ENCODE measurements at regions of chr1 and their contacts with region 1.

Region 1: DNA sequence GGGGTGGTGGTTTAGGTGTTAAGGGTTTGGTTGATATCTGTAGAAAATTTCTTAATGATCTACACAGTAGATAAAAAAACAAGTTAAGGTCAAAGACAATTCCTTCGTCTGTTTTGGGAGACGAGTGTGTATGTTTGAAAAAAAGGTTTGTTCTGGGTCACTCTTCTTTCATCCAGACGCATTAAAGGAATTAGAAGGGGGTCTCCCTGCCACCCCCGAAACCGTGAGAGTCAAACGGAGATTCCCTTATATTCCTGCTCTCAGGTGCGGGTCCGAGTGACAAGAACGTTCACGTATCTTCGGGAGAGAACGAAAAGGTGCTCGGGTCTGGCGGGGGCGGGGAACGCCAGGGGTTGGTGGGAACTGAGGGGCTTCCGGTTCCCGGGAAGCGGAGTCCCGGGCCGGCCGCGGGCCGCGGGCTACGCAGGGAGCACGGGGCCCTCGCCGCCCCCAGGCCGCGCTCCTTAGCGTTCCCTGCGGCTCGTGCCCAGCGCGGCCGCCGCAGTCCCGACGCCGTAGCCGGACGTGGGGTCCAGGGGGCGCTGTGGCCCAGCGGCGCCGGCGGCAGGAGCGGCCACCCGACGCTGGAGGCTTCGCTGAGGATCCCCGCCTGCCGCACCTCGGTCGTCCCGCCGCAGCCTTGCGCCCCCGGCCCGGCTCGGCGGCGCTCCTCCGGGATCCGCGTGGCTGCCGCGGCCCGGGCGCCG is at the start of gene ZFYVE9:
- DNase-seq: peak; percentile 87
- ATAC-seq: peak; percentile 81
- H3K4me3 ChIP-seq: peak within 1 kb of the TSS; percentile 90
- H3K27ac ChIP-seq: peak within 1 kb of the TSS; percentile 30
- H3K4me1 ChIP-seq: peaks cover 30% of the 10 kb centered on the region
- H3K27me3 ChIP-seq: no peaks in the 10 kb centered on the region
- CTCF ChIP-seq: peak; percentile 52
- total RNA-seq, gene ZFYVE9: 14.2 and 16.6 TPM in 2 replicates

Region 2: DNA sequence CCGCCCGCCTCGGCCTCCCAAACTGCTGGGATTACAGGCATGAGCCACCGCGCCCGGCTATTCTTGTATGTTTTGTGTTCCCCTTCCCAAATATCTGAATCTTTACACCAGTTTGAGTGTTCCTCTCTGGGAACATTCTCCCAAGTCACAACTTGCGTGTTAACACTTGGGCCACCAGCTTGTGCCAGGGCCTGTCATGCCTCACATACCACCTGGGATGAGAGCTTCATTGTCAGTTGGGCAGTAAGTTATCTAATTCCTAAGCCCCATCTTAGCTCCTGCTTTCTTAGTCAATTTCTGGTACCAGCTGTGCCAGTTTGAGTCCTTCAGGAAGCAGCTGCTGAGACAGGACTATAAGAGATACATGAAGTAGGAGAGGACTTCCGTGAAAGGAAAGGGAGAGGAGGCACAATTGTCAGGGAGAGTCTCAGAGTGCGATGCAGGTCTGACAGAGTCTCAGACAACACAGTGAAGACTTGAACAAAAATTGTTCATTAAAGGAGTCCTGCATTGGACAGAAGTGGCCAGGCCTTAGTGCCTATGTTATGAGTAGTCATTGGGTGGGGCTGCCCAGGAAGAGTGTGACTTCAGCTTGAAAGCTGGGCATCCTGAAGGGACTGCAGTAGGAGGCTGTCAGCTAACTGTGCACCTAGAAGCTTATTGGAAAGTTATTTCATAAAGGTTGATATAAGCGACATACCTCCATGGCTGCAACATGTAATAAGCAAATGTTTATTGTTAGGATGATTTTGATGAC is 17.5 kb after region 1 on chr1:
- CTCF ChIA-PET with region 1: interaction called, 11 read pairs
- POLR2A ChIA-PET with region 1: no interaction called
- intact Hi-C with region 1: no loop called
- DNase-seq: peak; percentile 76
- ATAC-seq: peak; percentile 100
- H3K4me3 ChIP-seq: no peak overlapping the region
- H3K27ac ChIP-seq: peak overlapping the region; percentile 31; the same call in 1 of the 2 replicates
- H3K4me1 ChIP-seq: peaks cover 9% of the 10 kb centered on the region
- H3K27me3 ChIP-seq: no peaks in the 10 kb centered on the region
- CTCF ChIP-seq: no peak

Region 3: DNA sequence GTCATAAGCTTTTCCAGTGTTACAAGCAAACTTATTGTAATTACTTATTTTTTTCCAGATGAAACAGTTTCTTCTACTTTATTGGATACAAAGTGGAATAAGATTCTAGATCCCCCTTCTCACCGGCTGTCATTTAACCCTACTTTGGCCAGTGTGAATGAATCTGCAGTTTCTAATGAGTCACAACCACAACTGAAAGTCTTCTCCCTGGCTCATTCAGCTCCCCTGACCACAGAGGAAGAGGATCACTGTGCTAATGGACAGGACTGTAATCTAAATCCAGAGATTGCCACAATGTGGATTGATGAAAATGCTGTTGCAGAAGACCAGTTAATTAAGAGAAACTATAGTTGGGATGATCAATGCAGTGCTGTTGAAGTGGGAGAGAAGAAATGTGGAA is 95.8 kb after region 1 on chr1:
- CTCF ChIA-PET with region 1: no interaction called
- POLR2A ChIA-PET with region 1: no interaction called
- intact Hi-C with region 1: loop called (anchors 5 kb)
- DNase-seq: peak; percentile 66
- ATAC-seq: peak; percentile 36; the same call in 1 of the 2 replicates
- H3K4me3 ChIP-seq: no peak overlapping the region
- H3K27ac ChIP-seq: no peak overlapping the region
- H3K4me1 ChIP-seq: peaks cover 33% of the 10 kb centered on the region
- H3K27me3 ChIP-seq: no peaks in the 10 kb centered on the region
- CTCF ChIP-seq: no peak

Region 4: GRCh38 chr1:52296345-52296744 is 154.7 kb after region 1 on chr1:
- CTCF ChIA-PET with region 1: no interaction called
- POLR2A ChIA-PET with region 1: no interaction called
- intact Hi-C with region 1: loop called (anchors 1 kb)
- DNase-seq: peak; percentile 76
- ATAC-seq: peak; percentile 90
- H3K4me3 ChIP-seq: no peak overlapping the region
- H3K27ac ChIP-seq: no peak overlapping the region
- H3K4me1 ChIP-seq: no peaks in the 10 kb centered on the region
- H3K27me3 ChIP-seq: no peaks in the 10 kb centered on the region
- CTCF ChIP-seq: peak; percentile 86

Measured in PC-3 (cell line).